ENCODE measurements at regions of chr3 and their contacts with region 1.

Region 1: DNA sequence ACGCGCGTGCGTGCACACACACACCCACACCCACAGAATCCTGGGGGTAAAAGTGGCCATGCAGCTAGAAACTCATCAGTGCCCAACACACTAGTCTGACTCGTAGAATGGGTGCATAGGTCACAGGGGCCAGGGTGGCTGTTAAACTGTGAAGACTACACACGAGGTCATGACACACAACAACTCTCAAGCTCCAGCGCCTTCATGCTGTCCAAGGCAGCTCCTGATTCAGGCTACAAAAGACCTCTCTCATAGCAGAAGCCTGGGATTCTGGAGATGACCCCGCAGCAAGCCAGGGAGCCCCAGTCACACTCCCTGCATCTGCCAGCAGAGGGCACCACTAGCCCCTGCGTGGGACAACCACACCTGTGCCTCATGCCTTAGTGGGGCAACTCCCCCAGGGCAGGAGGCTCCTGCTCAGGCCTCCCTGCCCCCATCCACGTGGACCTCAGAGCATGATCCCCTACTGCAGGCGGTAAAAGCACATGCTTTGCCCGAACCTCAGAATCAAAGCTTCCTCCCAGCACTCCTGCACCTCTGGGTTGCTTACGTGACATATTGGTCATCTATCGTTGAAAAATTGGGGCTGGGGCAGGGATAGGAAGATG is 93.1 kb downstream of the LRIG1 start:
- DNase-seq: peak; percentile 71 to 91
- ATAC-seq: peak; percentile 75
- H3K4me3 ChIP-seq: no peak overlapping the region
- H3K27ac ChIP-seq: peak overlapping the region in 1 of 2 donors; percentile 90
- H3K4me1 ChIP-seq: no peaks in the 10 kb centered on the region
- H3K27me3 ChIP-seq: no peaks in the 10 kb centered on the region

Region 2: DNA sequence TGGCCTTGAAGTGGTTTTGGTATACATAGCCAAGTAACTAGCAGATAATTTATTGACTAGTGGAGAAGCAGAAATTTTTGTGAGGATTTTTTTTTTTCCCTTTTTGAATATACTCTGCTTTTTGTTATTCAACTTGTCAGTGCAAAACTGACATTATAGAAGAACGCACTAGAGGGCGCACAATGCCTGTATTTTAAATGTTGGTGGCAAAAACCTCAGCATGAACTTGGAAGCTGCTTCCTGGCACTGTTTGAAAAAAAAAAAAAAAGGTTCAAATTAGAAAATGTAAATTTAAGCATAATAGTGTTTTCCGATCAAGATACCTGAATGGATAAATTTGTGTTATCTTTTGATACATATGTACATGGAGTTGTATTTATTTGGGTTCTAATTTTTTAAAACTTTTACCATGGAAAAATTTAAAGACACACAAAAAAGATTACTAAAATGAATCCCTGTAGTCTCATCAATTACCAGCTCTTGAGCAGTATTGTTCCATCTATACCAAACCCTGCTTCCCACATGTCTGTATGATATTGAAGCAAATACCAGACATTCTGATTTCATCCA is 130.9 kb before region 1 on chr3:
- intact Hi-C with region 1: loop called in 1 of 2 experiments (anchors 10 kb)
- DNase-seq: no peak
- ATAC-seq: no peak
- H3K4me3 ChIP-seq: no peak overlapping the region
- H3K27ac ChIP-seq: no peak overlapping the region
- H3K4me1 ChIP-seq: no peaks in the 10 kb centered on the region
- H3K27me3 ChIP-seq: no peaks in the 10 kb centered on the region

Region 3: GRCh38 chr3:66500576-66501482 is 93.1 kb after region 1 on chr3 and contains the start of gene LRIG1:
- intact Hi-C with region 1: loop called (anchors 2 to 5 kb)
- DNase-seq: peak; percentile 99 to 100
- ATAC-seq: peak; percentile 97
- H3K4me3 ChIP-seq: peak within 1 kb of the TSS; percentile 68 to 82
- H3K27ac ChIP-seq: peak within 1 kb of the TSS; percentile 84 to 87
- H3K4me1 ChIP-seq: peaks cover 0 to under 1% of the 10 kb centered on the region in 2 donors
- H3K27me3 ChIP-seq: no peaks in the 10 kb centered on the region
- total RNA-seq, gene LRIG1: 75.7 to 115 TPM

Region 4: DNA sequence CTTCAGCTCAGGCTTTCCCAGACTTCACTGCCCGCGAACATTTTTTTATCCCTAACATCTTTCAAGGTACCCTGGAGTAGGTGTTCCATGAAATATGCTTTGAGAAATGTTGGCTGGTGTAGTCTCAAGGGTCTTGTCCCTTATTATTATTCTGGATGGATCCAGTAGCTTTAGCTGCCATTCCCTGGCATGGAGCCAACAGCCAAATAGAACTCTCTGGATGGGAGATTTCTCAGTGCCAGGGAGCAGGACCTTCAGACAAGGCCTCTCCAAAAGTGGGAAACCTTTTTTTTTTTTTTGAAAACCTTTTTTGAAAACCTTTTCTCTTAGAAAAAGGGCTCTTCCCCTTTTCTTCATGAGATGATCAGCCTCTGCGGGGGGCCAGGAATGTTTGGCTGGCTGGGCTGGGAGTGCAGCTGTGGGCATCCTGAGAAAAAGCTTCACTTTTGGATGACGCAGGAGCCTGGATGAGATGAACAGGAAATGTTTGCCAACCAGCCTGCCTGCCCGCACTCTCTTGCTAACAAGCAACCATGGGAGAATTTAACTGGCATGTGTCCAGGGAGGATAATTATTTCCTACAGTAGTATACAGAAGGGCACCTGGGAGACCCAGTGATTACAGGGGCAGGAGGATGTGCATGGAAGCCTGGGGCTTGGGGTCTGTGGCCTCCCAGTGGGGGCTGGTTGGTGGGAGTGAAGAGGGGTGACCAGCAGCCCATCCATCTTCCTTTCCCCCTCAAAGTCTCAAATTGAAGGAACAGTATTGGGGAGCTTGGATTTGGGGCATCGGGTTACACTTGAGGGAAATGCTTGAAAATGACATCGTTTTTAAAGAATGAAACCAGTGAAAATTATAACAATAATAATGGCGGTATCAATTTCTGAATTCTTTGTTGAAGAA is 202.2 kb after region 1 on chr3:
- intact Hi-C with region 1: loop called in 1 of 2 experiments (anchors 10 kb)
- DNase-seq: no peak
- ATAC-seq: no peak
- H3K4me3 ChIP-seq: no peak overlapping the region
- H3K27ac ChIP-seq: no peak overlapping the region
- H3K4me1 ChIP-seq: no peaks in the 10 kb centered on the region
- H3K27me3 ChIP-seq: no peaks in the 10 kb centered on the region

Region 5: GRCh38 chr3:66644549-66644948 is 236.8 kb after region 1 on chr3:
- intact Hi-C with region 1: no loop called
- DNase-seq: no peak
- ATAC-seq: no peak
- H3K4me3 ChIP-seq: no peak overlapping the region
- H3K27ac ChIP-seq: no peak overlapping the region
- H3K4me1 ChIP-seq: no peaks in the 10 kb centered on the region
- H3K27me3 ChIP-seq: no peaks in the 10 kb centered on the region

Region 6: GRCh38 chr3:66816090-66816761 is 408.5 kb after region 1 on chr3:
- intact Hi-C with region 1: loop called (anchors 5 kb)
- DNase-seq: no peak
- ATAC-seq: peak; percentile 81
- H3K4me3 ChIP-seq: no peak overlapping the region
- H3K27ac ChIP-seq: no peak overlapping the region
- H3K4me1 ChIP-seq: peaks cover 0 to 2% of the 10 kb centered on the region in 2 donors
- H3K27me3 ChIP-seq: no peaks in the 10 kb centered on the region

Region 7: DNA sequence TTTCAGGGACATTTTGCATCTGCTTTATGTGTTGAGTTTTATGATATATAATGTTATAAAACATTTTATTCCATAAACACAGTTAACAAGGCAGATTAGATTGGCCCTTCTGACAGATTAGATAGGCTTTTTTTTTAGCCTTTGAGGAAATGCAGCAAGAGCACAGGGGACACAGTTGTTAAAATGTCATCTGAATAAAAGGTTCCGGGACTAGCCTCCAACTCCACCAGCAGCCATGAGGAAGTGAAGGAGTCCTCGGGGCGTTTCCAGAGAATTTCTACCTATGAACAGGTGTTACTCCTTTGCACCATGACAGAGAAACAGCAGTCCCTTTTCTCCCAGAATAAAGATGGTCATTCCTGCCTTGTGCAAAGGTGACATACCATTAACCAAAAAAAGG is 422.6 kb after region 1 on chr3:
- intact Hi-C with region 1: no loop called
- DNase-seq: no peak
- ATAC-seq: no peak
- H3K4me3 ChIP-seq: no peak overlapping the region
- H3K27ac ChIP-seq: no peak overlapping the region
- H3K4me1 ChIP-seq: no peaks in the 10 kb centered on the region
- H3K27me3 ChIP-seq: no peaks in the 10 kb centered on the region